A549 (cell line): ENCODE measurements at regions of chr7 and their contacts with region 1.

Region 1: DNA sequence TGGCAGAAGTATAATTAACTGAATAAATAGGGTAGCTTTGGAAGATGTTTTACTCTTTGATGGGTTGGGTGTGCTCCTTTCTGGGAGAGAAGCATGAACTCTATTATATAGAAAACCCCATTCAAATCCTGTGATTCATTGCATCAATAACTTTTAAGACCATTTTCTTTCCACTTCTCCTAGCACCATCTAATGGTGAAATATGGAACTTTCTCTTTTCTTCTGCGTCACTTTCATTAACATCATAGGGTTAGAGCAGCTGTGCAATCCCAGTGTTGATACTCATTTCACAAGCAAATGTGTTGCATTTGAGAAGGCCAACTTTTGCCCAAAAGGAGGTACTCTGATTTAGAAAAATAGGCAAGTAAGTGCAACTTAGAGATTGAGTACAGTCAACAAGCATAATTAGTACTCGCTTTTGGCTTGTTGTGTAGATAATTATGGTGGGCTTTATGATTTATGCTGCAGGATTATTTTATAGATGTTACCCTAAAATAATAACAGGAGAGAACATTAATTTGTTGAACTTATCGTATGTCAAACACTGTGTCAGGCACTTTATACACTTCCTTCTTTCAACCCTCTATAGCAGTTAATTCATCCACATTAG is 92.9 kb downstream of the CPED1 start:
- DNase-seq: peak; percentile 4 to 34
- ATAC-seq: peak; percentile 63 to 75; a peak in 5 of 6 replicates
- H3K4me3 ChIP-seq: no peak overlapping the region
- H3K27ac ChIP-seq: no peak overlapping the region
- H3K4me1 ChIP-seq: peaks cover 9% of the 10 kb centered on the region; the same call in 2 of the 3 replicates
- CTCF ChIP-seq: peak; percentile 61
- EP300 ChIP-seq: no peak
- POLR2A ChIP-seq: no peak
- RAD21 ChIP-seq: peak; percentile 56 to 67; a peak in 4 of 5 replicates

Region 2: DNA sequence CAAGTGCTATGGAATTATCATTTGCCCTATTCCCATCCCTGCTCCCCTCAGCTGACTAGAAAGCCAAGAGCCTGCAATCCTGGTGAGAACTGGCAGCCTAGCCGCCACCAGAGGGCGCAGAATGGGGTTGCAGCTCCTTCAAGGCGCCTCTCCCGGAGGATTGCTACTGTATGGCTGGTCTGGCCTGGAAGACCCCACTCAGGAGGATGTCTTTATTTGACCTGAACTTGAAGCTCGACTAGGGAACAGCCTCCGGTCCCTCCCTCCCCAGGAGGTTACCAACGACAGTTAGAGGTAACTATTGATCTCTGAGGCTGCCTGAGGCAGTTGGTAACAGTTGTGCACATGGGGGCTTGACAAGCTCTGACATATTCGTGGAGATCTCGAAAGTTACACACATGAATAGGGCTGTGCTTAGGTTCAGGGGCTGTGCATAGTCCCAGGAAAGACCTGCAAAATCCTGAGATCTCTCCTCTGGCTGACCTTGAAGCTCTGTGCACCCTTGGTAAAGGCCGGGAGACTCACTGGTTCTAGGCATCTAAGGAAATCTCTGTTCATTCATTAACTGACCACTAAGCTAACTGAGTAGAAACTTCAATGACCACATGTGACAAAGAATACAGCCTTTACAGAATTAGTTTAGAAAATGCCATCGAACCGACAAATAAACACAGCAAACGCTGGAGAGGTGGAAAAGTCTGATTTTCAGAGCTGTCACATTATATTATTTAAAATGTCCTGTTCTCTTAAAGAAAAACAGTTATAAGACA is 289.2 kb before region 1 on chr7:
- CTCF ChIA-PET with region 1: interaction called, 15 read pairs
- POLR2A ChIA-PET with region 1: no interaction called
- DNase-seq: peak; percentile 60 to 73
- ATAC-seq: peak; percentile 99 to 100
- H3K4me3 ChIP-seq: no peak overlapping the region
- H3K27ac ChIP-seq: no peak overlapping the region
- H3K4me1 ChIP-seq: no peaks in the 10 kb centered on the region
- CTCF ChIP-seq: peak; percentile 77
- EP300 ChIP-seq: no peak
- POLR2A ChIP-seq: no peak
- RAD21 ChIP-seq: peak; percentile 51 to 58; a peak in 4 of 5 replicates

Region 3: DNA sequence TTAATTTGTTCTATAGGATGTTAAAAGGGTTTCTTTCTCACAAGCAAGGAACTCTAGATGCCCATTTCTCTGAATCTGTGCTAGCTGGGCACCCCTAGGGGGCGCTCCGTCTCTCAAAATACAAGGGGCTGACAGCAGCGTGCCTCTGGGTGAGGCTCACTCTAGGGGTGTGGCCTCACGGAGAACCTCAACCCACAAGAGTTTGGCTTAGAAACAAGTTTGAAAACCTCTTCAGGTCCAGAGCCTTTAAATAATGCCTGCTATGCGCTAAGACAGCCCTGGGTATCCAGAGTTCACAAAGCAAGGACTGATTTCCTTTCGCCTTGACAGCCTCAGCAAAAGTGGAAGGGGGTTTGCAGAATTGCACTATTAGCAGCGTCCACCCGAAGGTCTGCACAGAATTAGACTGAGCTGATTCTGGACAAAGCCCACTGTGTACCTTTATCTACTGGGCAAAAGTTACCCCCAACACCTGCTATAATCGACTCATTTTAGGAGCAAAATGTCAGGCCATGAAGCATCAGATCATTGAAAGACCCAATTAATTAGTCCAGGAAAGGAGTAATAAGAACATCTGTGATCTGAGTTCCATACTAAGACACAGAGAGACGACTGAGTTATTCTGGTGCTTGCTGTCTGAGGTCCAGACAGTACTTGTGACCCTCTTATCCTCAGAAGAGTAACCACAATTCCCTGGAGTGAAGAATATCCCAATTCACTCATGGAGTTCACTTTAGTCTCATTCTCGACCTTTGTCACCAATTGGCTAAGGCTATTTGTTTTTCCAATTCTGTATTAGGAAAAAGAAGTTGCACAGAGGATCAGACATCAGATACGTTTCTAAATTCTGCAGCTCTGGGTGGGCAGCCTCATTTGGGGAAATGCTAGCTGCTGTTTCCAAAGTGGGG is 93.5 kb before region 1 on chr7:
- CTCF ChIA-PET with region 1: interaction called, 26 read pairs
- POLR2A ChIA-PET with region 1: no interaction called
- DNase-seq: peak; percentile 58 to 80
- ATAC-seq: peak; percentile 91 to 98
- H3K4me3 ChIP-seq: peak overlapping the region; percentile 35
- H3K27ac ChIP-seq: no peak overlapping the region
- H3K4me1 ChIP-seq: peaks cover 8% of the 10 kb centered on the region; the same call in 2 of the 3 replicates
- CTCF ChIP-seq: peak; percentile 87
- EP300 ChIP-seq: no peak
- POLR2A ChIP-seq: no peak
- RAD21 ChIP-seq: peak; percentile 76 to 79

Region 4: DNA sequence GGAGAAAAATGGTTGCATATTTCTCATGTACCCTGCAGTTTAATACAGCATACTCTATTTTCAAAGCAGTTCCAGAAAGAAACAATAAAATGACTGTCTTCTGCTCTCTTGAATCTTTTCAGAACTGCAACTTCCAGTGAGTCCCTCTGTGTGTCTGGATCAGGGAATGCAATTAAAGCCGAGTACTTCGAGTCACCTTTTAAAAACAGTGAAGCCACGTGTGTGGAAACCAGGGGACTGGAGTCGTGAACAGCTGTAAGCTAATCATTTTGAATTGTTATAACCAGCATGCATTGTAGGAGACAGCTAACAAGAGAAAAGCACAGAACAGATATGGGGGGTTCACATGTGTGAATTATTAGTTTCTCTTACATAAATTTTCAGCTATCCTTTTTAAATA is 16.1 kb after region 1 on chr7:
- CTCF ChIA-PET with region 1: interaction called, 12 read pairs
- POLR2A ChIA-PET with region 1: interaction called, 3 read pairs
- DNase-seq: no peak
- ATAC-seq: no peak
- H3K4me3 ChIP-seq: no peak overlapping the region
- H3K27ac ChIP-seq: no peak overlapping the region
- H3K4me1 ChIP-seq: no peaks in the 10 kb centered on the region
- CTCF ChIP-seq: no peak
- EP300 ChIP-seq: no peak
- POLR2A ChIP-seq: no peak
- RAD21 ChIP-seq: no peak